Naive thymus-derived CD4-positive, alpha-beta T cell (primary cell): ENCODE measurements at regions of chr3 and their contacts with region 1.

Region 1: DNA sequence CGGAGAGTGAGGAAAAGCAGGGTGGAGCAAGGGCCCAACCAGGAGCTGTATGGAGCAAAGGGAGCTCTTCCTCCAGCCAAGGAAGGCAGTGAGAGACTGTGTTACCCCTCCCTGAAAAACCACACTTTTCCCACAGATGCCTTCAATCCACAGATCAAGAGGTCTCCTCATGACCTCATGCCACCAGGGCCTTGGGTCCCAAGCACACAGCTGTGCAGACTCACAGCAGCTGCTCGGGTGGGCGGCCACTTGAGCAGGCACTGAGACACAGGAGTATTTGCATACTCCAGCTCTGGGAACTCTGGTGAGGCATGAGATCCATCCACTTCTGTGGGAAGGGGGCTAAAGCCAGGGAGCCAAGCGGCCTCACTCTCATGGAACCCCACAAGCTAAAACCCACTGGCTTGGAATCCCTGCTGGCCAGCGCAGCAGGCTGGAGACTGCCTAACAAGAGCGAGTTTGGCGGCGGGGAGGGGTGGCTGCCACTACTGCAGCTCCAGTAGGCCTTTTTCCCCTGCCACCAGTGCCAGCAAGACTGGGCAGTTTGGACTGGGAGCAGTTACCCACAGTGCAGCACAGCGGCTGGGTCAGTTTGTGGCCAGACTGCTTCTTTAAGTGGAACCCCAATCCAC is 880.6 kb upstream of the ARPP21 start:
- DNase-seq: no peak
- ATAC-seq: no peak
- H3K4me3 ChIP-seq: no peak overlapping the region
- H3K4me3 Mint-ChIP-seq: no peak overlapping the region
- H3K27ac ChIP-seq: no peak overlapping the region
- H3K27ac Mint-ChIP-seq: no peak overlapping the region
- H3K4me1 ChIP-seq: no peaks in the 10 kb centered on the region
- H3K4me1 Mint-ChIP-seq: no peaks in the 10 kb centered on the region
- H3K27me3 ChIP-seq: no peaks in the 10 kb centered on the region
- H3K27me3 Mint-ChIP-seq: peaks cover 0 to 4% (median 0%) of the 10 kb centered on the region in 5 donors

Region 2: DNA sequence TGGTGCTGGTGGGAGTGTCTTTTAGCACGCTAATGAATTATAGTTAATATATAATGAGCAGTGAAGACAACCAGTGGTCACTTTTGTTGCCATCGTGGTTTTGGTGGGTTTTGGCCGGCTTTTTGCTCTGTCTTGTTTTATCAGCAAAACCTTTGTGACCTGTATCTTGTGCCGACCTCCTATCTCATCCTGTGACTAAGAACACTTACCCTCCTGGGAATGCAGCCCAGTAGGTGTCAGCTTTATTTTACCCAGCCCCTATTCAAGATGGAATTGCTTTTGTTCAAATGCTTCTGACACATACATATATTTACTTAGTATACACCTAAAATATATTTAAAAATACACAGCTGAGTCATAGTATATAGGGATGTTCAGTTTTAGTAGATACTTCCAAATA is 190.0 kb before region 1 on chr3:
- CTCF ChIA-PET with region 1: no interaction called
- POLR2A ChIA-PET with region 1: no interaction called
- intact Hi-C with region 1: no loop called
- DNase-seq: no peak
- ATAC-seq: no peak
- H3K4me3 ChIP-seq: no peak overlapping the region
- H3K4me3 Mint-ChIP-seq: no peak overlapping the region
- H3K27ac ChIP-seq: no peak overlapping the region
- H3K27ac Mint-ChIP-seq: no peak overlapping the region
- H3K4me1 ChIP-seq: no peaks in the 10 kb centered on the region
- H3K4me1 Mint-ChIP-seq: no peaks in the 10 kb centered on the region
- H3K27me3 ChIP-seq: no peaks in the 10 kb centered on the region
- H3K27me3 Mint-ChIP-seq: no peaks in the 10 kb centered on the region

Region 3: DNA sequence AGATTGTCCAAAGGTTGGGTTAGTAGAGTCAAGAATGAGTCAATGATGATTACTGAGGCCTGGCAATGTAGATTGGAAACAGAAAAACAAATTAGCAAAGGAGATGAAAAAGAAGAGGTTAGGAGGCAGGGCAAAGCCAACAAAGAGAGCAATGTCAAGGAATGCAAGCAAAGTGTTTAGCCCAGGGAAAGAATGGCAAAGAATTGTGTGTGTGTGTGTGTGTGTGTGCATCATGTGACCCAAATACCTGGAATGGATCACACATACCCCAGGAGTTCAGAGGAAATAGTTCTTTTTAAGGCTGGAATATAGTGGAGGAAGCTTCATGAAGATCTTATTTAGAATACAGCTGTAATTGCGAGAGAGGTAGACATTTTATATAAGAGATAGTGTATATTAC is 48.9 kb after region 1 on chr3:
- CTCF ChIA-PET with region 1: no interaction called
- POLR2A ChIA-PET with region 1: no interaction called
- intact Hi-C with region 1: loop called in 1 of 2 experiments (anchors 10 kb)
- DNase-seq: no peak
- ATAC-seq: no peak
- H3K4me3 ChIP-seq: no peak overlapping the region
- H3K4me3 Mint-ChIP-seq: no peak overlapping the region
- H3K27ac ChIP-seq: no peak overlapping the region
- H3K27ac Mint-ChIP-seq: no peak overlapping the region
- H3K4me1 ChIP-seq: no peaks in the 10 kb centered on the region
- H3K4me1 Mint-ChIP-seq: no peaks in the 10 kb centered on the region
- H3K27me3 ChIP-seq: no peaks in the 10 kb centered on the region
- H3K27me3 Mint-ChIP-seq: no peaks in the 10 kb centered on the region